ENCODE measurements at regions of chr18 and their contacts with region 1.

Region 1: DNA sequence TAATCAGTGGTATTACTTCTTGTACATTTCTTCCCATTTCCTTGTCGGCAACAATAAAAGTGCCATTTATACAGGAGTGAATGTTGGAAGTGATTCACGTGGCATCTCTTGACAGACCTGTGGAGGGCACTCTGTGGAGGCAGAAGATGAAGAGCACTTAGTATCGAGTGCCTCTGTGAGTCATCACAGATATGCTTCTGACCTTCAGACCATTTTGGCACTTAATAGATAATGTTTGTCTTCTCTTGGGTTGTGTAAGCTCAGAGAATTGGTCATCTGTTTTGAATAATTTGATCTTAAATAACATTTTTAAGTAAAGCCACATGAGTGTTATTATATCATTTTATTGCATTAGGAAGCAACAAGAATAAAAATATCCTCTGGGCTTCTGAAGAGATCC is 305.5 kb downstream of the PTPRM start:
- DNase-seq: peak; percentile 89
- H3K4me3 Mint-ChIP-seq: peak overlapping the region; percentile 62
- H3K27ac Mint-ChIP-seq: peak overlapping the region; percentile 96
- H3K4me1 Mint-ChIP-seq: peaks cover 38% of the 10 kb centered on the region
- H3K27me3 Mint-ChIP-seq: no peaks in the 10 kb centered on the region
- CTCF ChIP-seq: peak; percentile 15

Region 2: GRCh38 chr18:7760967-7761948 is 111.3 kb before region 1 on chr18:
- CTCF ChIA-PET with region 1: no interaction called
- POLR2A ChIA-PET with region 1: no interaction called
- intact Hi-C with region 1: no loop called
- DNase-seq: no peak
- H3K4me3 Mint-ChIP-seq: no peak overlapping the region
- H3K27ac Mint-ChIP-seq: no peak overlapping the region
- H3K4me1 Mint-ChIP-seq: peaks cover 15% of the 10 kb centered on the region
- H3K27me3 Mint-ChIP-seq: no peaks in the 10 kb centered on the region
- CTCF ChIP-seq: no peak

Region 3: DNA sequence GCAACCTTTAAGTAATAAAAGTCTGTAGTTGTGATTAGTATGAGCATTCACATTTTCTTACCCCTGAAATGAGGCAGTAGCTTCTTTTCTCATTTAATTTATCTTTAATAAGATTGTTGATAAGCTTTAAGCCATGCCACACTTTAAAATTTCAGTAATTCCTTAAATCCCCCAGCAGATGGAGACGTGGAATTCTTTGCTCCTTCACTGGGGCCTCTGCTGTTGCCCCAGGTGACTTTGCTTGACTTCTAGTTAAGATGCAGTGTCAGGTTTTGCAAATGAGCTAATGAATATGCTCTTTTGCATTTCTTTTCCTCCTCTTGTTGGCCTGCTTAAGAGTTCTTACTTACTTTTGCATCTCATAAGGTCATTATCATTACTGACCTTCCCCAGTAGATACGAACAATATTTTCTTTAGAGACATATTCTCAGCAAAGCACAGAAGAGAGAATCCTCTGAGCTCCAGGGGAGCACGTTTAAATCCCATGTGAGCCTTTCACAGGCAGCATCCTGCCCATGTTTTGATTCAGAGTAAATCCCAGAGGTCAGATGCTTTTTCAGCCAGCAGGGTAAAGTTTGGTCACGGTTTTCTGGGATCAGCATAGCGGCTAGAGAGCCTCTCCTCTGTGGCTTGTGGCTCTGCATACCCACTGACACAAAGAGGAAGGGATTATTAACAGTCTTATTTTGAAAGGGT is 82.6 kb before region 1 on chr18:
- CTCF ChIA-PET with region 1: interaction called, 25 read pairs
- POLR2A ChIA-PET with region 1: interaction called, 12 read pairs
- intact Hi-C with region 1: loop called (anchors 2 kb)
- DNase-seq: peak; percentile 68
- H3K4me3 Mint-ChIP-seq: no peak overlapping the region
- H3K27ac Mint-ChIP-seq: no peak overlapping the region
- H3K4me1 Mint-ChIP-seq: peaks cover 12% of the 10 kb centered on the region
- H3K27me3 Mint-ChIP-seq: no peaks in the 10 kb centered on the region
- CTCF ChIP-seq: peak; percentile 41

Region 4: DNA sequence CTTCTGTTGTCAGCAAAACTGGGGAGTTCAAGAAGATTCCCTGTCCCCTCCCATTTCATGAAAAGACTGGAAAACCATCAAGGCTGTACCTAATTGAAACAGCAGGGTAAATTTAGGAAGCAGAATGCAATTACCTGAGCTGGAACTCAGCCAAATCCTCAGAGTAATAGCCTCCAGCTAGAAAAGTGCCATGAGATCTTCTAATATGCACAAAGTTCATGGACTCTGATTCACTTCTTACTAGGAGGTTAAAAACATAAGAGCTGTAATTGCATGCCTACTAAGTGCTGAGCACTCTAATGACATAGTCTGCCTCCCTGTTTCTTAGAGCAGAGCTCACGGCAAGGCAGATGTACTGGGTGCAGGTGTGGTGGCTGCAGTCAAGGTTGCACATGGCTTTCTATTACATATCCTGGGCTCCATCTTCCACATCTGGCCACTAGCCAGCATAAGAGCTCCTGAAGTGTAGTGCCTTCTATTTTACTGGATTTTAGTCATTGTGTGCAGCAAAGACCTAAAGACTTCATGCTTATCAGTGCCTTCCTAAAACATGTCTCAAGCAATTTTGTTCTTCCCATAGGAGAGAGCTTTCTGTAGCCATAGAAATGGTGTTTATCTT is 36.2 kb after region 1 on chr18:
- CTCF ChIA-PET with region 1: interaction called, 7 read pairs
- POLR2A ChIA-PET with region 1: interaction called, 19 read pairs
- intact Hi-C with region 1: no loop called
- DNase-seq: peak; percentile 70
- H3K4me3 Mint-ChIP-seq: no peak overlapping the region
- H3K27ac Mint-ChIP-seq: no peak overlapping the region
- H3K4me1 Mint-ChIP-seq: peaks cover 24% of the 10 kb centered on the region
- H3K27me3 Mint-ChIP-seq: no peaks in the 10 kb centered on the region
- CTCF ChIP-seq: no peak

Region 5: DNA sequence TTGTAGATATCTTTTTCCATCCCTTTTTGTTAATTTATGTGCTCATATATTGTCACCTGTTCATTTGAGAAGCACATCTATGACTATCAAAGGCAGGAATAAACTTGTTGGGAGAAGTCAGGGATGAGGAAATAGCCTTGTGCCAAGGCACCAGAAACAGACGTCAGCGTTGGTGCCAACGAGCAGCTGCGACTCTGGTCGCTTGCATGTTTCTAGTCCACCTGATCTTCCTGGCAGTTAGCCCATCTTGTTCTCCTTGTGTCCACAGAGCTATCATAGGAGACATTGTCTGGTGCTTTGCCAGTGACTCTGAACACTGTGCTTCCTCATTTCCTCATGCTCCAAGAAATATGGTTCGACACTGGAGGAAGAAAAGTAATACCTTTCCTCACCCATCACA is 69.0 kb after region 1 on chr18:
- CTCF ChIA-PET with region 1: no interaction called
- POLR2A ChIA-PET with region 1: interaction called, 10 read pairs
- intact Hi-C with region 1: loop called (anchors 2 kb)
- DNase-seq: peak; percentile 91
- H3K4me3 Mint-ChIP-seq: peak overlapping the region; percentile 35
- H3K27ac Mint-ChIP-seq: peak overlapping the region; percentile 96
- H3K4me1 Mint-ChIP-seq: peaks cover 58% of the 10 kb centered on the region
- H3K27me3 Mint-ChIP-seq: no peaks in the 10 kb centered on the region
- CTCF ChIP-seq: no peak

Region 6: GRCh38 chr18:7980136-7980535 is 107.6 kb after region 1 on chr18:
- CTCF ChIA-PET with region 1: no interaction called
- POLR2A ChIA-PET with region 1: no interaction called
- intact Hi-C with region 1: loop called (anchors 10 kb)
- DNase-seq: peak; percentile 21
- H3K4me3 Mint-ChIP-seq: no peak overlapping the region
- H3K27ac Mint-ChIP-seq: peak overlapping the region; percentile 28
- H3K4me1 Mint-ChIP-seq: peaks cover 9% of the 10 kb centered on the region
- H3K27me3 Mint-ChIP-seq: no peaks in the 10 kb centered on the region
- CTCF ChIP-seq: peak; percentile 19

Region 7: DNA sequence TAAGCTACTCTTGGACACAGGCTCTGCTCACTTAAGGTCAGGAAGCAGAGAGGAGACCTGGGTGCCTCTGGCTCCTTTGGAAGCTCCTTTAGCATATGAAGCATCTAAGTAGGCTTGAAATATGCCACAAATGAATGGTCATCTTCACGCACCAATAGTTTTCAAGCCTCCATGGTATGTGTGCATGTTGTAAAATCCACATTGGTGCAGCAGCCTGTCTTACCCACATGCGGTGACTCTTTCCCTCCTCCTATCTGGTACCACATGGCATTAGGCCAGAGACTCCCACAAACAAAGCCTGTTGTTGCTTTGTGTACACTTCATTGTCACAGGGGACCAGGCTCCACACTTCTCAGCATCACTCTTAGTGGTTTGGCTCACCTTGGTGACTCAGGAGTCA is 294.5 kb after region 1 on chr18:
- CTCF ChIA-PET with region 1: no interaction called
- POLR2A ChIA-PET with region 1: no interaction called
- intact Hi-C with region 1: no loop called
- DNase-seq: no peak
- H3K4me3 Mint-ChIP-seq: no peak overlapping the region
- H3K27ac Mint-ChIP-seq: no peak overlapping the region
- H3K4me1 Mint-ChIP-seq: peaks cover 10% of the 10 kb centered on the region
- H3K27me3 Mint-ChIP-seq: no peaks in the 10 kb centered on the region
- CTCF ChIP-seq: no peak

Region 8: DNA sequence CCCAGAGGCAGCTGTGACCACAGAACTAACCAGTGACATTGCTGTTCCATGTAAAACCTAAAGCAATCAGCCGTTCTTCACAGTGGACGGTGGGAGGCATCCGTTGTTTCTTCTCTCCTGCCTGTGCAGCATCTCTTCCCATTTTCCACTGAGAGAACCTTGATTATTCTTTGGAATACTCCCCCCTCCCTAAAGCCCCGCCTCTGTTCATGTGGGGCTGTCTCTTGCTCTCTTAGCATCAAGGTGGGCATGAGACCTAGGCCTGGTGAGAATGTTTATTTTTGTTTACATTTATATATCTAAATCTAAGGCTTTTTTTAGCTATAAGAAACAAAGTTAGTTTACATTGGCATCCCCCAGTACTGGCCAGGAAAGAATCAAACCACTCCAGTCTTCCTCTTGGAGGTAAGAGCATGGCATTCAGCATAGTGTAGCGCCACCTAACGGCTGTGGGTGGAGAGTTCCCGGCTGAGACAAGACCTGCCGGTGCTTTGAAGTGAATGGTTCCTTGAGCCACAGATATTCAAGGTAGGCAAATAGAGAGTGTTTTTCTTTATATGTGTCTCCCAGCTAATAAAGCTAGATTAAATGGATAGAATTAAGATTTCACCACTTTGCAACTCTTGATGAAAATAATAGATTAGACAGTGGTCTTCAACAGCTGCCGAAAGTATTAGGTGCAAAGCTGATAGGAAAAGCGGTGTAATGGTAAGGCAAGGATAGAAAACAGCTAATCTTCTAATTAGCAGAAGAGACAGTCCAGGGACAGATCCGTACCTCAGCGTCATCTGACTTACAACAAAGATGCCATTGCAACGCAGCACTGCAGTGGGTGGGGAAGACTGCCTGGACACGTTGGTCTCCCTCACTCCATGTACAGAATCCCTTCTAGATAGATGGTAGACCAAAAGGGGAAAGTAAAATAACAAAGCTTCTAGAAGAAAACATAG is 517.1 kb after region 1 on chr18:
- CTCF ChIA-PET with region 1: interaction called, 3 read pairs
- POLR2A ChIA-PET with region 1: no interaction called
- intact Hi-C with region 1: loop called (anchors 5 kb)
- DNase-seq: peak; percentile 77
- H3K4me3 Mint-ChIP-seq: no peak overlapping the region
- H3K27ac Mint-ChIP-seq: peak overlapping the region; percentile 10
- H3K4me1 Mint-ChIP-seq: no peaks in the 10 kb centered on the region
- H3K27me3 Mint-ChIP-seq: no peaks in the 10 kb centered on the region
- CTCF ChIP-seq: peak; percentile 87

Measured in MCF 10A (cell line).